ENCODE measurements at regions of chrX and their contacts with region 1.

Region 1: GRCh38 chrX:132740316-132741123 is 217.9 kb downstream of the HS6ST2 start:
- DNase-seq: peak; percentile 40
- ATAC-seq: no peak
- H3K4me3 ChIP-seq: no peak overlapping the region
- H3K27ac ChIP-seq: no peak overlapping the region
- H3K4me1 ChIP-seq: peaks cover 30% of the 10 kb centered on the region
- H3K27me3 ChIP-seq: no peaks in the 10 kb centered on the region
- CTCF ChIP-seq: peak; percentile 82

Region 2: DNA sequence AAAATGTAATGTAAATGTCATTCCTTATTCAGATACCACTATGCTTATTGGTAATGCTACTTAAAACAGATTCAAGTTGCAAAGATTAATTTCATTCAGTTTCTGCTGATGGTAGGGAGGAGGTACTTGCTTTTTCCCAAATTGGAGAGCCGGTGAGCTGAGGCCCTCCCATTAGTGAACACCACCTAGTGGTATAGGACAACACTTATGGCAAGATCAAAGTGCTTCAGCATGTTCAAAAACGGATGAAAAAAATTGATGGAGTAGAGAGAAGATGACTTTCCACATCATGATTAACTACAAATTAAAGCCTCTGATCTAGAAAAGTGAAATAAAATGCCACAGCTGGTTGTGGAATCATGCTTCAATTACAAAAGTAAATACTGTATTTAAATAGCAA is 364.6 kb before region 1 on chrX:
- CTCF ChIA-PET with region 1: no interaction called
- POLR2A ChIA-PET with region 1: no interaction called
- intact Hi-C with region 1: no loop called
- DNase-seq: peak; percentile 29
- ATAC-seq: peak; percentile 50; the same call in 1 of the 2 replicates
- H3K4me3 ChIP-seq: no peak overlapping the region
- H3K27ac ChIP-seq: no peak overlapping the region
- H3K4me1 ChIP-seq: no peaks in the 10 kb centered on the region
- H3K27me3 ChIP-seq: no peaks in the 10 kb centered on the region
- CTCF ChIP-seq: peak; percentile 51; the same call in 1 of the 2 replicates

Region 3: DNA sequence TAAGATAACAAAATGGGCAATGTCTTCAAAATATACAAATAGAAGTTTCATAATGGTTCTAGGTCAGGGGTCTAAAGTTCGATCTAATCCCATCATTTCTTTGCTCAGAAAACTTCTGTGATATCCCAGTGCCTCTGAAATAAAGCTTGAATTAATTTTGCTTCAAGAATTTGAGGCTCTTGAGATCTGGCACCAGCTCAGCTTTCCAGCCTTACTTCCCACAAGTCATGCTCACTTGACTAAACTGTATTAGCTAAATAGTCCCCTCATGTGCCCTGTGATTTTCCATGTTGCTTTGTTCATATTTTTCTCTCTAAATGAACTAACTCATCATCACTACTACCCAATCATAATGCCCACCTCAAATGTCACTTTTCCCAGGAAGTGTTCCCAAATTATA is 200.9 kb before region 1 on chrX:
- CTCF ChIA-PET with region 1: no interaction called
- POLR2A ChIA-PET with region 1: no interaction called
- intact Hi-C with region 1: no loop called
- DNase-seq: no peak
- ATAC-seq: no peak
- H3K4me3 ChIP-seq: no peak overlapping the region
- H3K27ac ChIP-seq: no peak overlapping the region
- H3K4me1 ChIP-seq: no peaks in the 10 kb centered on the region
- H3K27me3 ChIP-seq: no peaks in the 10 kb centered on the region
- CTCF ChIP-seq: no peak

Region 4: GRCh38 chrX:132876523-132877338 is 136.2 kb after region 1 on chrX:
- CTCF ChIA-PET with region 1: no interaction called
- POLR2A ChIA-PET with region 1: no interaction called
- intact Hi-C with region 1: loop called (anchors 5 kb)
- DNase-seq: no peak
- ATAC-seq: peak; percentile 57
- H3K4me3 ChIP-seq: no peak overlapping the region
- H3K27ac ChIP-seq: 0 out of 2 replicates have a peak overlapping the region, but pooled peaks have one; percentile 54
- H3K4me1 ChIP-seq: peaks cover 22% of the 10 kb centered on the region
- H3K27me3 ChIP-seq: no peaks in the 10 kb centered on the region
- CTCF ChIP-seq: no peak

Region 5: GRCh38 chrX:132940727-132941327 is 200.3 kb after region 1 on chrX:
- CTCF ChIA-PET with region 1: no interaction called
- POLR2A ChIA-PET with region 1: no interaction called
- intact Hi-C with region 1: loop called (anchors 5 kb)
- DNase-seq: peak; percentile 90
- ATAC-seq: peak; percentile 86
- H3K4me3 ChIP-seq: peak overlapping the region; percentile 61
- H3K27ac ChIP-seq: peak overlapping the region; percentile 99
- H3K4me1 ChIP-seq: peaks cover 26% of the 10 kb centered on the region
- H3K27me3 ChIP-seq: no peaks in the 10 kb centered on the region
- CTCF ChIP-seq: peak; percentile 49

Region 6: DNA sequence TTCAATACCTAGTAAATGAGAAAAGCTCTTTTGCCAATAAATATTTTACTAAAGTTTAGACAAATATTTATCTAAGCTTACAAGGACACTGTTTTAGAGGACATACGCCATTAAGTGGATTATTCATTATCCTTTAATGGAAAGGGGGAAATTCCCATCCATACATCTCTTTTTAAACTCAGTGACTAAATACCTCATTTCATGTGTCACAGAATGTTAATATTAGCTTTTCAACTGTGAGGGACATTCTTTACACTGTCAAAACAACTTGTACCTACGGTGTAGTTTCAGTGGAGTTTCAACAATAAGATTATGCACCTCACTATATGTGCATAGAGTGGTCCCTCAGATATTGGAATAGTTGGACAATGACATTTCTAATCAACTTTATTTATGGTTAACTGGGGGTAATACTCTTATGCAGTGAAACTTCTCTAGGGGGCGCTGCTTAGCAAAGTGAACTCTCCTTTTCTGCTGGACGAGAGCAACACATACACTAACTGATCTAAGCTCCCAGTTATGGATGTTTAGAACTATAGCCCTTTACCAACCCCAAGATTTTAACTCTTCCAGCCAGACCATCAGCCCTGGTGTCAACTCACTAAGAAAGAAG is 208.2 kb after region 1 on chrX:
- CTCF ChIA-PET with region 1: interaction called, 10 read pairs
- POLR2A ChIA-PET with region 1: no interaction called
- intact Hi-C with region 1: loop called (anchors 5 kb)
- DNase-seq: peak; percentile 60
- ATAC-seq: peak; percentile 75
- H3K4me3 ChIP-seq: peak overlapping the region; percentile 25; the same call in 1 of the 2 replicates
- H3K27ac ChIP-seq: peak overlapping the region; percentile 100
- H3K4me1 ChIP-seq: peaks cover 36% of the 10 kb centered on the region
- H3K27me3 ChIP-seq: no peaks in the 10 kb centered on the region
- CTCF ChIP-seq: peak; percentile 63

Region 7: GRCh38 chrX:132957211-132958090 is 216.9 kb after region 1 on chrX:
- CTCF ChIA-PET with region 1: interaction called, 5 read pairs
- POLR2A ChIA-PET with region 1: no interaction called
- intact Hi-C with region 1: loop called (anchors 1 kb)
- DNase-seq: no peak
- ATAC-seq: peak; percentile 25
- H3K4me3 ChIP-seq: peak overlapping the region; percentile 71
- H3K27ac ChIP-seq: no peak overlapping the region
- H3K4me1 ChIP-seq: peaks cover 54% of the 10 kb centered on the region
- H3K27me3 ChIP-seq: no peaks in the 10 kb centered on the region
- CTCF ChIP-seq: no peak

Region 8: GRCh38 chrX:133171962-133172708 is 431.6 kb after region 1 on chrX:
- CTCF ChIA-PET with region 1: no interaction called
- POLR2A ChIA-PET with region 1: no interaction called
- intact Hi-C with region 1: loop called (anchors 5 kb)
- DNase-seq: peak; percentile 65
- ATAC-seq: peak; percentile 87
- H3K4me3 ChIP-seq: no peak overlapping the region
- H3K27ac ChIP-seq: no peak overlapping the region
- H3K4me1 ChIP-seq: peaks cover 12% of the 10 kb centered on the region
- H3K27me3 ChIP-seq: no peaks in the 10 kb centered on the region
- CTCF ChIP-seq: peak; percentile 78

Region 9: DNA sequence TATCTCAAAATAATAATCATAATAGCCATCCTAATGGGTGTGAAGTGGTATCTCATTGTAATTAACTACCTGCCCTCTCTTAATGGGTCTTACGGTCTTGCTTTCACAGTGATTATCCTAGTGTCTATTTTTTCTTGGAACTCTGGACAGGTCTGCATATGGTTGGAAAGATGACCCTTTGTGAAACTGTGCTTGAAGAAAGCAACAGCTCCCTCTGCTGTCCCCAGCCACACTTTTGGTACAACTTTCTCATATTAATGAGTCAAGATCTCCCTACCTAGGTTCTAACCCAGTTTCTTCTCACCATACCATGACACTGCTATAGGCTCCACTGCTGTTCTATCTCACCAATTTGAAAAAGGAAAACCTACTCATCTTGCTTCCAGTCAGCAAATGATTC is 475.2 kb after region 1 on chrX:
- CTCF ChIA-PET with region 1: no interaction called
- POLR2A ChIA-PET with region 1: no interaction called
- intact Hi-C with region 1: loop called (anchors 2 kb)
- DNase-seq: peak; percentile 53
- ATAC-seq: peak; percentile 70
- H3K4me3 ChIP-seq: no peak overlapping the region
- H3K27ac ChIP-seq: no peak overlapping the region
- H3K4me1 ChIP-seq: no peaks in the 10 kb centered on the region
- H3K27me3 ChIP-seq: no peaks in the 10 kb centered on the region
- CTCF ChIP-seq: peak; percentile 69